Common myeloid progenitor, CD34-positive (primary cell): ENCODE measurements at regions of chr17 and their contacts with region 1.

Region 1: GRCh38 chr17:74379495-74380085 is 12.3 kb downstream of the GPR142 start:
- DNase-seq: peak; percentile 85 to 91 (median 90)
- H3K4me3 ChIP-seq: peak overlapping the region in 4 of 7 experiments; percentile 3 to 58 (median 20)
- H3K27ac ChIP-seq: no peak overlapping the region
- H3K4me1 ChIP-seq: peaks cover 0 to 21% (median 16%) of the 10 kb centered on the region in 4 experiments
- H3K27me3 ChIP-seq: no peaks in the 10 kb centered on the region

Region 2: GRCh38 chr17:74368092-74369081 is 11.2 kb before region 1 on chr17:
- CTCF ChIA-PET with region 1: interaction called, 105 read pairs
- POLR2A ChIA-PET with region 1: no interaction called
- DNase-seq: peak; percentile 42 to 56 (median 47)
- H3K4me3 ChIP-seq: peak overlapping the region in 3 of 7 experiments; percentile 36 to 60 (median 43)
- H3K27ac ChIP-seq: no peak overlapping the region
- H3K4me1 ChIP-seq: peaks cover 2 to 17% (median 15%) of the 10 kb centered on the region in 4 experiments
- H3K27me3 ChIP-seq: no peaks in the 10 kb centered on the region

Region 3: DNA sequence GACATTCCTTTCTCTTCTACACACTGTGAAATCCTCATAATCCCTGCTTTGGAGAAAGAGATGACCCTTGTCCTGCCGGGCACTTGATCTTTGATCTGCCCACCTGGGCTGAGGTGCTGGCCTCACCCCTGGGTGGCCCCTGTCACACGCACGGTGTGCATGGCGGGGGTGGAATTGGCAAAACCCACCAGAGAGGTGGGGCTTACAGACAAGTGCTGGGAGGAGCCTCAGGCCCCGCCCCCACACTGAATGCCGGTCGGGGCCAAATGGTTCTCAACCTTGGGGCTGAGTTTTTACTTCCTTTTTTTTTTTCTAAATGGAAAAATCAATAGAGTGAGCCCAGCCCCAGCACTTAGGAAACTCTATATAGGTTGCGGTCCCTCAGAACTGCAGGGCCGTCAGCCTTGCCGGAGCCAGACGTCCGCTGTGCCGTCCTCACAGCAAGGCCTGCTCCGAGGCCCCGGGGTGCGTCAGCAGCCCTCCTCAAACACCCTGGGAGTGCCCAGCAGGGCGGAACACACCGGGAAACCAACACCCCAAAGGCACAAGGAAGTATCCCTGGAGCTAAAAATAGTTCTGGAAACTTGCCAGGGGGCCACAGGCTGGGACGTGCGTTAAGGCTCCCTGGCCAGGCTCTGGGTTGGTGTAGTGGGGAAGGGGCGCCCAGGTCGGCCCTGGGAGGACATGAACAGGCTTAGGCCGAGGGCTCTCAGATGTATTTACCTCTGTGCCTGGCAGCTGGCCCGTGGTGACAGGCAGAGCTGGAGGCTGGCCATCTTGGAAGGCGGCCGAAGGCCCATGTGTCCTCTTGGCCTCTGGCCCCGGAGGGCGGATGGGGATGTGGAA is 63.3 kb after region 1 on chr17:
- CTCF ChIA-PET with region 1: interaction called, 19 read pairs
- POLR2A ChIA-PET with region 1: no interaction called
- DNase-seq: peak; percentile 82 to 87 (median 86)
- H3K4me3 ChIP-seq: peak overlapping the region in 5 of 7 experiments; percentile 34 to 69 (median 51)
- H3K27ac ChIP-seq: peak overlapping the region in 1 of 2 experiments; percentile 82
- H3K4me1 ChIP-seq: peaks cover 0 to 69% (median 47%) of the 10 kb centered on the region in 4 experiments
- H3K27me3 ChIP-seq: no peaks in the 10 kb centered on the region

Region 4: GRCh38 chr17:74467221-74467951 is 87.8 kb after region 1 on chr17:
- CTCF ChIA-PET with region 1: no interaction called
- POLR2A ChIA-PET with region 1: no interaction called
- DNase-seq: peak in 2 of 3 donors; percentile 33 to 50
- H3K4me3 ChIP-seq: peak overlapping the region; percentile 40 to 92 (median 81)
- H3K27ac ChIP-seq: peak overlapping the region; percentile 40 to 59
- H3K4me1 ChIP-seq: peaks cover 10 to 71% (median 62%) of the 10 kb centered on the region in 4 experiments
- H3K27me3 ChIP-seq: no peaks in the 10 kb centered on the region

Region 5: GRCh38 chr17:74499992-74500391 is 120.4 kb after region 1 on chr17:
- CTCF ChIA-PET with region 1: interaction called, 20 read pairs
- POLR2A ChIA-PET with region 1: no interaction called
- DNase-seq: no peak
- H3K4me3 ChIP-seq: no peak overlapping the region
- H3K27ac ChIP-seq: no peak overlapping the region
- H3K4me1 ChIP-seq: peaks cover 0 to 6% (median 2%) of the 10 kb centered on the region in 4 experiments
- H3K27me3 ChIP-seq: no peaks in the 10 kb centered on the region

Region 6: DNA sequence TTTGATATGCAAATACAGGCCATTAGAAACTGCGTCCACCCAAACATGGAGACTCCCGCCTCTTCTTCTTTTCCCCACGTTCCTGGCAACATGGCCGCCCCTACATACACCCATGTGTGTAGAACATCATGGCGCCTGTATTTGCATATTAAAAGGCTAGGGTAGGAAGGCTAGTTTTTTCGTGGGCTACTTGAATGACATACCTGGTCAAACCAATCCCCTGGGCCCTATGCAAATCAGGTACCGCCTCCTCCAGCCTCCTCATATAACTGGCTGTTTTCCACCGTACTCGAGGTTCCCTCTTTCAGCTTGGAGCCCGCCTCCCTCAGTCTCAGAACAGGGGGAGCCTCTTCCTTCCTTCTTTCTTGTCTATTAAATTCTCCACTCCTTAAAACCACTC is 152.5 kb after region 1 on chr17:
- CTCF ChIA-PET with region 1: interaction called, 31 read pairs
- POLR2A ChIA-PET with region 1: interaction called, 3 read pairs
- DNase-seq: peak; percentile 94 to 98 (median 97)
- H3K4me3 ChIP-seq: peak overlapping the region in 5 of 7 experiments; percentile 56 to 76 (median 63)
- H3K27ac ChIP-seq: peak overlapping the region in 1 of 2 experiments; percentile 60
- H3K4me1 ChIP-seq: peaks cover 10 to 34% (median 23%) of the 10 kb centered on the region in 4 experiments
- H3K27me3 ChIP-seq: no peaks in the 10 kb centered on the region